ENCODE measurements at regions of chr3 and their contacts with region 1.

Region 1: GRCh38 chr3:179322286-179323196 is at the start of gene ZNF639:
- DNase-seq: peak; percentile 70 to 96 (median 88)
- ATAC-seq: peak; percentile 87
- H3K4me3 ChIP-seq: peak within 1 kb of the TSS; percentile 84 to 86
- H3K4me3 Mint-ChIP-seq: peak within 1 kb of the TSS; percentile 84
- H3K27ac ChIP-seq: peak within 1 kb of the TSS; percentile 83 to 91
- H3K27ac Mint-ChIP-seq: peak within 1 kb of the TSS; percentile 96
- H3K4me1 ChIP-seq: peaks cover 24% of the 10 kb centered on the region
- H3K4me1 Mint-ChIP-seq: peaks cover 33% of the 10 kb centered on the region
- H3K27me3 ChIP-seq: no peaks in the 10 kb centered on the region
- H3K27me3 Mint-ChIP-seq: no peaks in the 10 kb centered on the region
- CTCF ChIP-seq: peak; percentile 87
- total RNA-seq, gene ZNF639: 103 to 112 TPM

Region 2: GRCh38 chr3:178419071-178419470 is 903.5 kb before region 1 on chr3:
- CTCF ChIA-PET with region 1: no interaction called
- POLR2A ChIA-PET with region 1: no interaction called
- intact Hi-C with region 1: no loop called
- DNase-seq: no peak
- ATAC-seq: no peak
- H3K4me3 ChIP-seq: no peak overlapping the region
- H3K4me3 Mint-ChIP-seq: no peak overlapping the region
- H3K27ac ChIP-seq: no peak overlapping the region
- H3K27ac Mint-ChIP-seq: no peak overlapping the region
- H3K4me1 ChIP-seq: no peaks in the 10 kb centered on the region
- H3K4me1 Mint-ChIP-seq: no peaks in the 10 kb centered on the region
- H3K27me3 ChIP-seq: no peaks in the 10 kb centered on the region
- H3K27me3 Mint-ChIP-seq: no peaks in the 10 kb centered on the region
- CTCF ChIP-seq: no peak

Region 3: DNA sequence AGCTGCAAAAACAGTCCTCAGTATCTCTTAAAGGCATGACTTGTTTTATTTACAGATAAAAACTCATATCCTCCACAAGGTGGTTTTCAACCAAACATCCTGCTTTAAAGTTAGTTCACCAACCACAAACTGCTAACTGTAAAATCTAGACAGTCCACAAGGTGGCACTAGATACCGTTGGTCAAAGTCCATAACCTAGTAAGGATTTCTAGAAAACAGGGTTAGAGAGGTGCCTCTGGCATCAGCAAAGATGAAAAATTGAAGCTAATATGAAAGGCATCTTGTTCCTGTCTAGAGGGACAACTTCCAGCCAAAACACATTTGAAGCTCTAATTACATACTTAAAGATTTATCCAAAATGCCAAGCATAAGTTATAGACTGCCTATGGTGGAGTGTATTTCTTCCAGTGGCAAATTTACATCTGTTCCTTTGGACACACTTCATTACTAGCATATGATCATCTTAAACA is 307.0 kb before region 1 on chr3:
- CTCF ChIA-PET with region 1: interaction called, 19 read pairs
- POLR2A ChIA-PET with region 1: interaction called, 4 read pairs
- intact Hi-C with region 1: no loop called
- DNase-seq: peak; percentile 26 to 87 (median 59)
- ATAC-seq: peak; percentile 98
- H3K4me3 ChIP-seq: no peak overlapping the region
- H3K4me3 Mint-ChIP-seq: no peak overlapping the region
- H3K27ac ChIP-seq: no peak overlapping the region
- H3K27ac Mint-ChIP-seq: no peak overlapping the region
- H3K4me1 ChIP-seq: peaks cover 3% of the 10 kb centered on the region
- H3K4me1 Mint-ChIP-seq: peaks cover 18% of the 10 kb centered on the region
- H3K27me3 ChIP-seq: no peaks in the 10 kb centered on the region
- H3K27me3 Mint-ChIP-seq: no peaks in the 10 kb centered on the region
- CTCF ChIP-seq: peak; percentile 84

Region 4: DNA sequence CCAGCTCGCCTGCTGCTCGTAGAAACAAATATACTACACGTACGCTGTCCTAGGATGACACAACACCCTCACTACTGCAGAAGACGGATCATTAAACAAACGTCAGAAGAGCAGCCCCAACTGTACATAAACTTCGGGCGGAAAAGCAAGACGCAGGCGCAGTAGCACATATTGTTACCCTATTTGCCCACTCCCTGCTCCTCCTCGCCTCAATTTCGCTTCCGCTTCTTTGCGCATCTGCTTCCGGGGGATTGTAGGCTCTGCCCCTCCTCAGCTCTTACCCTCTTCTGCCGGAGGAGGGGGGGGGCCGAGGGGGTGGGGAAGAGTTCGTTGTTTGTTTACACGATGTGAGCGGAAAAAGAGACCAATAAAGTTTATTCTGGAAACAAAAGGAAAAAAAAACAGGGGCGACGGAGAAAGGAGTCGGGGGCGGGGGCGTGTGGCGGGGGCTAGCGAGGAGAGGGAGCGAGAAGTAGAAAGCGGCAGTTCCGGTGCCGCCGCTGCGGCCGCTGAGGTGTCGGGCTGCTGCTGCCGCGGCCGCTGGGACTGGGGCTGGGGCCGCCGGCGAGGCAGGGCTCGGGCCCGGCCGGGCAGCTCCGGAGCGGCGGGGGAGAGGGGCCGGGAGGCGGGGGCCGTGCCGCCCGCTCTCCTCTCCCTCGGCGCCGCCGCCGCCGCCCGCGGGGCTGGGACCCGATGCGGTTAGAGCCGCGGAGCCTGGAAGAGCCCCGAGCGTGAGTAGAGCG is 174.5 kb before region 1 on chr3 and contains the start of gene PIK3CA:
- CTCF ChIA-PET with region 1: interaction called, 29 read pairs
- POLR2A ChIA-PET with region 1: interaction called, 21 read pairs
- intact Hi-C with region 1: loop called (anchors 1 to 2 kb)
- DNase-seq: peak; percentile 87 to 99 (median 92)
- ATAC-seq: peak; percentile 75
- H3K4me3 ChIP-seq: peak within 1 kb of the TSS; percentile 77 to 91
- H3K4me3 Mint-ChIP-seq: peak within 1 kb of the TSS; percentile 93
- H3K27ac ChIP-seq: peak within 1 kb of the TSS; percentile 93 to 94
- H3K27ac Mint-ChIP-seq: peak within 1 kb of the TSS; percentile 99
- H3K4me1 ChIP-seq: peaks cover 32% of the 10 kb centered on the region
- H3K4me1 Mint-ChIP-seq: peaks cover 39% of the 10 kb centered on the region
- H3K27me3 ChIP-seq: no peaks in the 10 kb centered on the region
- H3K27me3 Mint-ChIP-seq: no peaks in the 10 kb centered on the region
- CTCF ChIP-seq: no peak
- total RNA-seq, gene PIK3CA: 60.3 to 61.8 TPM

Region 5: DNA sequence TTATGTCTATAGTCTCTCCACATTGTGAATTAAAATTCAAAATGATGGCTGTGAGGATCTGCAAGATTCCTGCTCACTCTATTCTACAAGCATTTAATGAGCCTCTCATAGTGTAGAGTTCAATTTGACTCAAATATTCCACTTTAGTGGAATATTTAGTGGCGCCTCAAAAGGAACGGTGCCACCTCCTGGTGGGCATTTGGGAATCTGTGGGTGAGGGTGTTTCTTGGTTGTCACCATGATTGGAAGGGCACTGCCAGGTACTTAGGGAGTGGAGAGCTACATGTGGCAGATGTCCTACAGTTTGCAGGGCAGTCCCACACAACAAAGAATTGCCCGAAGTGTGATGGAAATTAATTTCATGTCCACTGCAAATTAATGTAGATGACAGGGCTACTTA is 50.2 kb before region 1 on chr3:
- CTCF ChIA-PET with region 1: no interaction called
- POLR2A ChIA-PET with region 1: no interaction called
- intact Hi-C with region 1: loop called in 1 of 2 experiments (anchors 5 kb)
- DNase-seq: peak in 3 of 9 experiments; percentile 12 to 29 (median 15)
- ATAC-seq: no peak
- H3K4me3 ChIP-seq: no peak overlapping the region
- H3K4me3 Mint-ChIP-seq: no peak overlapping the region
- H3K27ac ChIP-seq: no peak overlapping the region
- H3K27ac Mint-ChIP-seq: no peak overlapping the region
- H3K4me1 ChIP-seq: no peaks in the 10 kb centered on the region
- H3K4me1 Mint-ChIP-seq: no peaks in the 10 kb centered on the region
- H3K27me3 ChIP-seq: no peaks in the 10 kb centered on the region
- H3K27me3 Mint-ChIP-seq: peaks cover 11% of the 10 kb centered on the region
- CTCF ChIP-seq: no peak

Region 6: DNA sequence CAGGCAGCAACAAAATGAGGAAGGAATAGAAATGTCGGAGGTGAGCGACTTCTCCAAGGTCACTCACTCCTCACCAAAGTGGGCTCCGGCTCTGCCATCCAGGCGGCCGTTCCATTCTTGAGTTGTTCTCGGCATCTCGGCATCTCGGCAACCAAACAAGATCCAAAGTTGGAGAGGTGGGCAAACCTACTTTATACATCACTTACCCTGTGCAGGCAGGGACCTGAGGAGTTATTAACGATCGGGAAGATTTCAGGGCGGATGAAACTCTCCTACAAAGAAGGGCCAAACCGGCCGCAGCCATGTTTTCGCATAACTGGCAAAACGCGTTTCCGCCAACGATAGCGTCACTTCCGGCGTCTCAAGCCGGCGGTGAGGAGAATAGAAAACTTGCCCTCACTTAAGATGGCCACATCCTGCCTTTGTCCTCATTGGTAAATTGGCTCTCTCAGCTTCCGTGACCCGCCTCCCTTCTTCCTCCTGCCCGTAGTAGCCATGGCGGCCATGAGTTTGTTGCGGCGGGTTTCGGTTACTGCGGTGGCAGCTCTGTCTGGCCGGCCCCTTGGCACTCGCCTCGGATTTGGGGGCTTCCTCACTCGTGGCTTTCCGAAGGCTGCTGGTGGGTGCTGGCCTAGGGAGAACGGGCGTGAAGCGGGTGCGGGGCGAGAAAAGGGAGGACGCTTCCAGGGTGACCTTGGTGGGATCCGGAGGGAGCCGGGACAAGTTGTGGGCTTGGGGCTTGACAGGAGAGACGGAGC is 282.0 kb after region 1 on chr3 and contains the starts of genes MRPL47 and NDUFB5:
- CTCF ChIA-PET with region 1: no interaction called
- POLR2A ChIA-PET with region 1: no interaction called
- intact Hi-C with region 1: loop called in 1 of 2 experiments (anchors 1 kb)
- DNase-seq: peak; percentile 81 to 98 (median 93)
- ATAC-seq: peak; percentile 99
- H3K4me3 ChIP-seq: peak within 1 kb of the TSS; percentile 82 to 96
- H3K4me3 Mint-ChIP-seq: peak within 1 kb of the TSS; percentile 97
- H3K27ac ChIP-seq: peak within 1 kb of the TSS; percentile 93 to 98
- H3K27ac Mint-ChIP-seq: peak within 1 kb of the TSS; percentile 100
- H3K4me1 ChIP-seq: peaks cover 13% of the 10 kb centered on the region
- H3K4me1 Mint-ChIP-seq: peaks cover 55% of the 10 kb centered on the region
- H3K27me3 ChIP-seq: no peaks in the 10 kb centered on the region
- H3K27me3 Mint-ChIP-seq: no peaks in the 10 kb centered on the region
- CTCF ChIP-seq: no peak
- total RNA-seq, gene MRPL47: 36.4 to 37.8 TPM
- total RNA-seq, gene NDUFB5: 21.0 to 25.6 TPM

Region 7: DNA sequence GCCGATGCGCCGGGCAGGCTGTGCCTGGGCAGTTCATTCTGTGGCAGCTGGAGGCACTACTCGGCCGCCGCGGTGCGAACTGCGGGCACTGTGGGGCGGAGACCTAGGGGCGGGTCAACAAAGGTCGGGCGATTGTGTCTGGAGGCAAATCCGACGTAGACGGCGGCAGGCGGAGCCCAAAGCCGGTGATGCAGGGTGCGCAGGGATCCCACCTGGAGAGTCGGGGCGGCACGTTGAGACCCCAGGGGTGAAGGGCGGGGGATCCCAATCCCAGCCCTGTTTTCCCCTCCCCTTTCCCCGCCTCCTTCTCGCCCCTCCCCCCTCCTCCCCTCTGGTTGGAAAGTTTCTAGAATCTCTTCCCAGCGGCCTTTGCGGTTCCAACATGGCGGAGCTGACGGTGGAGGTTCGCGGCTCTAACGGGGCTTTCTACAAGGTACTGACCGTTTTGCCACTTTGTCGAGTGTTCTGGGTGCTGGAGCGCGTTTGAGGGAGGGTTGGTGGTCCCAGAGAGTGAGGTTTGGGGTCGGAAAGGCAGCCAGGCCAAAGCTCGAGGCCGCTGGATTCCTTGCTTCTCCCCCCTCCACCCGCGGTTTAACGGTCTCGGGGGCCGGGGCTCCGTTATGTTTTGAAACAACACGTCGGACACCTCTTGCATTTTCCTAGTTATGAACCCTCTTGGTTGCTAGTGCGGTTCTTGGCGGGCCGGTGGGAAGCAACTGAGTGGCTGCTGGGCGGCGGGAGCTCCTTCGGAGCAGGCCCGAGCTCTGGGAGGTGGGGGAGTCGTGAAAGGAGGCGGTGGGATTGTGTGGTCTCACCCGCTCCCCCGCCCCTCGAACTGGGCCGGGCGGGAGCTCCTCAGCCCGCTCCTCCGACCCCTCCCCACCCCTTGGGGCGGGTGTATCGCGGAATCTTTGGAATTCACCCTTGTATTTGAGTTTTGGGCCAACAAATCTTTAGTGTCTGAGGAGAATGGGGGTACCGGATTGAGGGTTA is 1590.1 kb after region 1 on chr3 and contains the start of gene FXR1:
- CTCF ChIA-PET with region 1: no interaction called
- POLR2A ChIA-PET with region 1: no interaction called
- intact Hi-C with region 1: loop called (anchors 5 to 10 kb)
- DNase-seq: peak; percentile 76 to 94 (median 90)
- ATAC-seq: peak; percentile 84
- H3K4me3 ChIP-seq: peak within 1 kb of the TSS; percentile 96 to 98
- H3K4me3 Mint-ChIP-seq: peak within 1 kb of the TSS; percentile 97
- H3K27ac ChIP-seq: peak within 1 kb of the TSS; percentile 93 to 95
- H3K27ac Mint-ChIP-seq: peak within 1 kb of the TSS; percentile 96
- H3K4me1 ChIP-seq: peaks cover 47% of the 10 kb centered on the region
- H3K4me1 Mint-ChIP-seq: peaks cover 72% of the 10 kb centered on the region
- H3K27me3 ChIP-seq: no peaks in the 10 kb centered on the region
- H3K27me3 Mint-ChIP-seq: no peaks in the 10 kb centered on the region
- CTCF ChIP-seq: no peak
- total RNA-seq, gene FXR1: 192 to 206 TPM